Body of pancreas (tissue), 4 donors: ENCODE measurements at regions of chr5 and their contacts with region 1.

Region 1: DNA sequence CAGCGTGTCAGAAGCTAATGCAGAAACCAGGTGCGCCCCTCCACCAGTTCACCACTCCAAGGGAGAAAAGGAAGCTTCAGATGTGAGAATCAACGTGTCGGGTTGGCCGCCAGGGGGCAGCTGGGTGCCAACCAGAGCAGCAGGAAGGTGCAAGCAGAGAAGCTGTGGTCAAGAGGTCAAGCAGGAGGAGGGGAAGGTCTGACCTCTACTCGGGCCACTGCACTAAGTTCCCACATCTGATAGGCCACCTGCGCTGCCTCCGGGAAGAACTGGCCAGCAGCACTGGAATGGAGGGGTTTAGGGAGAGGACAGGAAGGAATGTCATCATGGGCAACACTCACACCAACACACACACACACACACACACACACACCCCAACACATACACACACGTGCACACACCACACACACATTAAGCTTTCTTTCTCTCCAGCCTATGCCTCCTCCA is 31.4 kb downstream of the ANXA6 start:
- DNase-seq: peak; percentile 70 to 77 (median 74)
- ATAC-seq: peak; percentile 45
- H3K4me3 ChIP-seq: no peak overlapping the region
- H3K27ac ChIP-seq: no peak overlapping the region
- H3K4me1 ChIP-seq: peaks cover 15% of the 10 kb centered on the region
- H3K27me3 ChIP-seq: no peaks in the 10 kb centered on the region
- CTCF ChIP-seq: peak; percentile 59 to 87 (median 81)
- POLR2A ChIP-seq: no peak

Region 2: DNA sequence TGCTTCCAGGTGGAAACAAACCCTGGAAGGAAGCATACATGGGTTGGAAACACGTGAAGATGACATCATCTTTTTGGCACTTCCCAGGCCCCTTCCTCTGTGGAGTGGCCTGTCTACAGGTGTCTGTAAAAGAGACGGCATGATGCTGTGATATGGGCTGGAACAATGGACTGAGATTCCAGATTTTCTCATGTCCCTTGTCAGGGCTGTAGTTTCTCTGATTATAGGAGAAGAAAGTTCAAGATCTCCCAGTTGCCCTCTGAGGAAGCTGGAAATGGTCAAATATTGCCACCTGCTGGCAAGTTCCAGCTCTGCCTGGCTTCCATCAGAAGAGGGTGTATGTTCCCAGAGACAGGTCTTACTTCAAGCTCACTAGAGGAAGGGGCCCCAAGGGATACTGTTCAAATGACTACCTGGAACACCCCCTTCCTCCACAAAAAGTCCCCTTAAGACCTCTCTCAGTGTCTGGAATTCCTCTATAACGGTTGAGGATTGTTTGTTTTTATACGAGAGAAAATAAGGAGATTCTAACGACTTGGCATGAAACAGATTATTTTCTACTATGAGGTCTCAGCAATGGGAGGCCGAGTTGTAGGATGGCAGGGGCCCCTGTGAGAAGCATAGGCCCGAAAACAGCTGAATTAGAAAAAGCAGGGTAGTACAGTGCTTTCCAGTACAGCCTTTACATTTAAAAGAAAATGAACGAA is 38.6 kb after region 1 on chr5:
- intact Hi-C with region 1: loop called (anchors 5 kb)
- DNase-seq: peak; percentile 80 to 83 (median 83)
- ATAC-seq: peak; percentile 93
- H3K4me3 ChIP-seq: no peak overlapping the region
- H3K27ac ChIP-seq: no peak overlapping the region
- H3K4me1 ChIP-seq: peaks cover 14% of the 10 kb centered on the region
- H3K27me3 ChIP-seq: no peaks in the 10 kb centered on the region
- CTCF ChIP-seq: peak; percentile 77 to 93 (median 91)
- POLR2A ChIP-seq: no peak

Region 3: GRCh38 chr5:151239237-151239861 is 113.1 kb after region 1 on chr5:
- intact Hi-C with region 1: loop called (anchors 5 kb)
- DNase-seq: peak; percentile 60 to 80 (median 72)
- ATAC-seq: peak; percentile 47
- H3K4me3 ChIP-seq: no peak overlapping the region
- H3K27ac ChIP-seq: no peak overlapping the region
- H3K4me1 ChIP-seq: peaks cover 10% of the 10 kb centered on the region
- H3K27me3 ChIP-seq: no peaks in the 10 kb centered on the region
- CTCF ChIP-seq: peak; percentile 25 to 83 (median 58)
- POLR2A ChIP-seq: no peak

Region 4: GRCh38 chr5:151328734-151329133 is 202.5 kb after region 1 on chr5:
- intact Hi-C with region 1: no loop called
- DNase-seq: no peak
- ATAC-seq: no peak
- H3K4me3 ChIP-seq: no peak overlapping the region
- H3K27ac ChIP-seq: no peak overlapping the region
- H3K4me1 ChIP-seq: no peaks in the 10 kb centered on the region
- H3K27me3 ChIP-seq: no peaks in the 10 kb centered on the region
- CTCF ChIP-seq: no peak
- POLR2A ChIP-seq: no peak